ENCODE measurements at regions of chr5 and their contacts with region 1.

Region 1: DNA sequence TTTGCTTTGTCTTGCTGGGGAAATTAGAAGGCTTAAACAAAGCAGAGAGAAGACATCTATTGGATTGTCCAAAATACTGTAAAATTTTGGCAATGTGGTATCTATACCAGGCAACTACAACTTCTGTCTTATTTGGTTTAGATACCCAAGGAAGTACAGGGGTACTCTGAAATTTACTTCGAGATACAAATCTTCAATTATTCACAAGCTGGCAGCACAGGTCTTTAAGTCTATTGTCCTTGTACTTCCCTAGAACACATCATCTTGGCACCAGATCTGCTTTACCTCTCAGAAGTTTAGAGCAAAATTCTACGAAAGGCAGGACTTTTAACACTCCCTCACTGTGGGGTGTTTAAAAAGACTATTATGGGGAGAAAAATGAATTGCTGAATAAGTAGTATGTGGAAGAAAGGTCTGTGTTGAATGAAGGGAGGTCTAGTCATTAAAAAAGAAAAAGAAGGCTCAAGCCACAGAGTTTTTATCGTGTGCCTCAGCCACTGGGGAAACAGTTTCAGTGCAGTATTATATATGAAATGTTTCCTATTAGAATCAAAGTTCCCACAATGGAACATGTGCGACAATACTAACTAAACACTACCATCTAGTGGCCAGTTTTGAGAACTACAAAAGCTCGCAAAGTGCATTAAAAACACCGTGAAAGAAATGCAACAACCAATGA is 93.7 kb downstream of the PDE4D start:
- DNase-seq: peak; percentile 80
- H3K4me3 Mint-ChIP-seq: no peak overlapping the region
- H3K27ac Mint-ChIP-seq: no peak overlapping the region
- H3K4me1 Mint-ChIP-seq: no peaks in the 10 kb centered on the region
- H3K27me3 Mint-ChIP-seq: peaks cover 12% of the 10 kb centered on the region

Region 2: DNA sequence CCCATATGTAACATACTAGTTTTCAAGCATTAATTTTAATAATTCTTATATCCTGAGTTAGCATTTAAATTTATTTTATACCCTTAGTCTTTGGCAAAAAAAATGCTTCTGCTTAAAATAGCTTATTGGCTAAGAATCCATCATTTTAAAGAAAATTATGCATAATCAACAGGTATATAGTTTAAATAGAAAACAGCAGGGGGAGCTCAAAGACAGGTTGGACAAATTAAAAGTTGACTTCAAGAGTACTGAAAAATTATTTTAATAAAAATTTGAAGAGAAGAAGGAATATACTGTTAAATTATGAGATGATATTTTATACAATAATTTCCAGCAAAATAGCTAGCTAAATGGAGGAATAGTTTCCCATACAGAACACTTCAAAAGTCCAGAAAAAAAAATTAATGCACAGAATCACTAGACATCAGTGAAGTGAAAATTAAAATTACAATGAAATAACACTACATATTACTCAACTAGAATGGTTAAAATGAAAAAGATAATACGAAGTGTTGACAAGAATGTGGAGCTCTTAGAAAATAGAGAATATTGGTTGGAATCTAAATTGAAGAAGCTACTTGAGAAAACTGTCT is 293.4 kb before region 1 on chr5:
- intact Hi-C with region 1: loop called (anchors 1 kb)
- DNase-seq: no peak
- H3K4me3 Mint-ChIP-seq: no peak overlapping the region
- H3K27ac Mint-ChIP-seq: no peak overlapping the region
- H3K4me1 Mint-ChIP-seq: no peaks in the 10 kb centered on the region
- H3K27me3 Mint-ChIP-seq: peaks cover 12% of the 10 kb centered on the region

Region 3: DNA sequence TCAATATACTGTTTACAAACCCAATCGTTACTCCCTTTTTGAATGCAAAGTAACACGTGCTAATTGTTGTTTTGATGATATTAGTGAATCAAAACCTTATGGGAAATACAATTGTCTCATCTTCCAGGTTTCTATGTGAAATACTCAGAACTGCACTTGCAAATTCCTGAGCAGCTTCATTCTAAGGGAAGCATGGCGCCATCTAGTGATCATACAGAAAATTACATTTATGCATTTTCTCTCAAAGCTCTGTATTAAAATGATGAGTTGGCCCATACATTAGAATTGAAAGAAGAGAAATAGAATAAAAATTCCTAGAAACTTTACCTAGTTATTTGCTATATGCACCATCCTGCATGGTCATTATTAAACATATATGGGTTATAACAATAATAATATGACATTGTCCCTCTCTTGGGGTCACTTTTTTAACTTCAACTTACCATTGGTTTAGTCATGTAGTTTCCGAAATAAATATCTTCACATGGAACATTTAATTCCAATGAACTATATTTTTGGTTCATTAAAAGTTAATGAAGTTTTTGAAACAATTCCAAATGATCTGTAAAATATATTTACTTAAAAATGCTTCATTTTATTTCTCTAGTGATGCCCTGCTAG is 126.3 kb before region 1 on chr5:
- intact Hi-C with region 1: loop called (anchors 1 kb)
- DNase-seq: peak; percentile 67
- H3K4me3 Mint-ChIP-seq: no peak overlapping the region
- H3K27ac Mint-ChIP-seq: no peak overlapping the region
- H3K4me1 Mint-ChIP-seq: no peaks in the 10 kb centered on the region
- H3K27me3 Mint-ChIP-seq: peaks cover 22% of the 10 kb centered on the region

Region 4: DNA sequence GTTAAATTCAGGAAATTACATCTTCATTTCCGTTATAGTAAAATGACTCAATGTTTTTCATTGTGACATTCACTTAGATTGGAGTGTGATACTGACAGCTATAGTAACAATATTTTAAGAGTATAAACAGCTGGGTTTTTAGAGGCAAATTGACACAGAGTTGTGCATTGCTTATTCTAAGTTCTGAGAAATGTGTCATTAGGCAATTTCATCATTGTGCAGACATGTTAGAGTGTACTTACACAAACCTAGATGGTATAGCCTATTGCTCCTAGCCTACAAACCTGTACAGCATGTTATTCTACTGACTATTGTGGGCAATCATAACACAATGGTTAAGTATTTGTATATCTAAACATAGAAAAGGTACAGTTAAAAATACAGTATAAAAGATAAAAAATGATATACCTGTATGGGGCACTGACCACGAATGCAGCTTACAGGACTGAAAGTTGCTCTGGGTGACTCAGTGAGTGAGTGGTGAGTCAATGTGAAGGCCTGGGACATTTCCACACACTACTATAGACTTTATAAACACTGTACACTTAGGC is 38.9 kb before region 1 on chr5:
- intact Hi-C with region 1: loop called (anchors 2 kb)
- DNase-seq: no peak
- H3K4me3 Mint-ChIP-seq: no peak overlapping the region
- H3K27ac Mint-ChIP-seq: no peak overlapping the region
- H3K4me1 Mint-ChIP-seq: peaks cover 5% of the 10 kb centered on the region
- H3K27me3 Mint-ChIP-seq: peaks cover 6% of the 10 kb centered on the region

Region 5: GRCh38 chr5:59810041-59810440 is 10.2 kb after region 1 on chr5:
- intact Hi-C with region 1: no loop called
- DNase-seq: peak; percentile 86
- H3K4me3 Mint-ChIP-seq: peak overlapping the region; percentile 29
- H3K27ac Mint-ChIP-seq: no peak overlapping the region
- H3K4me1 Mint-ChIP-seq: peaks cover 2% of the 10 kb centered on the region
- H3K27me3 Mint-ChIP-seq: peaks cover 18% of the 10 kb centered on the region

Region 6: GRCh38 chr5:59893429-59894227 is 93.8 kb after region 1 on chr5 and contains the start of gene PDE4D:
- intact Hi-C with region 1: no loop called
- DNase-seq: peak; percentile 63
- H3K4me3 Mint-ChIP-seq: no peak within 1 kb of the TSS
- H3K27ac Mint-ChIP-seq: no peak within 1 kb of the TSS
- H3K4me1 Mint-ChIP-seq: no peaks in the 10 kb centered on the region
- H3K27me3 Mint-ChIP-seq: peaks cover 37% of the 10 kb centered on the region
- total RNA-seq, gene PDE4D: 47.7 and 50.1 TPM in 2 replicates